Heart left ventricle (tissue), 16 donors: ENCODE measurements at regions of chr16 and their contacts with region 1.

Region 1: GRCh38 chr16:56203052-56203451 is 11.8 kb downstream of the GNAO1 start:
- DNase-seq: no peak
- ATAC-seq: peak; percentile 37 to 81 (median 68)
- H3K4me3 ChIP-seq: no peak overlapping the region
- H3K27ac ChIP-seq: peak overlapping the region in 1 of 12 donors; percentile 39
- H3K4me1 ChIP-seq: peaks cover 0 to 26% (median 12%) of the 10 kb centered on the region in 12 donors
- H3K27me3 ChIP-seq: no peaks in the 10 kb centered on the region
- CTCF ChIP-seq: peak in 10 of 12 donors; percentile 15 to 46 (median 38)
- POLR2A ChIP-seq: no peak

Region 2: GRCh38 chr16:55944377-55944802 is 258.7 kb before region 1 on chr16:
- intact Hi-C with region 1: loop called in 8 of 10 experiments (anchors 5 to 10 kb)
- DNase-seq: peak; percentile 59 to 77 (median 71)
- ATAC-seq: peak; percentile 80 to 95 (median 89)
- H3K4me3 ChIP-seq: no peak overlapping the region
- H3K27ac ChIP-seq: peak overlapping the region in 1 of 12 donors; percentile 14
- H3K4me1 ChIP-seq: peaks cover 0 to 6% (median 0%) of the 10 kb centered on the region in 12 donors
- H3K27me3 ChIP-seq: peaks cover 0 to 5% (median 0%) of the 10 kb centered on the region in 9 donors
- CTCF ChIP-seq: peak; percentile 85 to 96 (median 92)
- POLR2A ChIP-seq: no peak

Region 3: DNA sequence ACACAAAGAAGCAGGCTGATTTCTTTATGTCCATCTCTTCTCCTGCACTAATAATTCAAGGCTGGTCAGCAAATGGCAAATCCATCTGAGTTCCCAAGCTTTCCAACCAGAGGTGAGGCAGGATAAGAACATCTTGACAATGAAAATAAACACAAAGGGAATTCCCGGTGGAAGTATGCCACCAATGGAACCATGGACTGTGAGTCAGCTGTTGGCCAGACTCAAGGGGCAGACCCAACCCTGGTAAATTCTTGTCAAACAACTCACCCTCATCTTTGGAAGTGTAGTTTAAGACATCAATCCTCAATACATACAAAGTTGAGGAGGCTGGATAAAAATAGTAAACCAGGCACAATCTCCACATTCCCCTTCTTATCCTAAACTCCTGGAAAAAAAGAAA is 253.5 kb before region 1 on chr16:
- intact Hi-C with region 1: loop called in 8 of 10 experiments (anchors 5 to 10 kb)
- DNase-seq: no peak
- ATAC-seq: no peak
- H3K4me3 ChIP-seq: no peak overlapping the region
- H3K27ac ChIP-seq: no peak overlapping the region
- H3K4me1 ChIP-seq: peaks cover 0 to 5% (median 0%) of the 10 kb centered on the region in 12 donors
- H3K27me3 ChIP-seq: no peaks in the 10 kb centered on the region
- CTCF ChIP-seq: no peak
- POLR2A ChIP-seq: no peak

Region 4: GRCh38 chr16:56041686-56042085 is 161.4 kb before region 1 on chr16:
- intact Hi-C with region 1: loop called in 4 of 10 experiments (anchors 10 kb)
- DNase-seq: peak in 4 of 5 donors; percentile 22 to 37 (median 30)
- ATAC-seq: peak; percentile 69 to 93 (median 92)
- H3K4me3 ChIP-seq: no peak overlapping the region
- H3K27ac ChIP-seq: no peak overlapping the region
- H3K4me1 ChIP-seq: peaks cover 0 to under 1% (median 0%) of the 10 kb centered on the region in 12 donors
- H3K27me3 ChIP-seq: no peaks in the 10 kb centered on the region
- CTCF ChIP-seq: peak in 11 of 12 donors; percentile 32 to 57 (median 46)
- POLR2A ChIP-seq: no peak

Region 5: GRCh38 chr16:56266641-56267607 is 63.9 kb after region 1 on chr16:
- intact Hi-C with region 1: no loop called
- DNase-seq: no peak
- ATAC-seq: no peak
- H3K4me3 ChIP-seq: no peak overlapping the region
- H3K27ac ChIP-seq: peak overlapping the region in 1 of 12 donors; percentile 89
- H3K4me1 ChIP-seq: peaks cover 0 to 45% (median 22%) of the 10 kb centered on the region in 12 donors
- H3K27me3 ChIP-seq: no peaks in the 10 kb centered on the region
- CTCF ChIP-seq: no peak
- POLR2A ChIP-seq: no peak

Region 6: DNA sequence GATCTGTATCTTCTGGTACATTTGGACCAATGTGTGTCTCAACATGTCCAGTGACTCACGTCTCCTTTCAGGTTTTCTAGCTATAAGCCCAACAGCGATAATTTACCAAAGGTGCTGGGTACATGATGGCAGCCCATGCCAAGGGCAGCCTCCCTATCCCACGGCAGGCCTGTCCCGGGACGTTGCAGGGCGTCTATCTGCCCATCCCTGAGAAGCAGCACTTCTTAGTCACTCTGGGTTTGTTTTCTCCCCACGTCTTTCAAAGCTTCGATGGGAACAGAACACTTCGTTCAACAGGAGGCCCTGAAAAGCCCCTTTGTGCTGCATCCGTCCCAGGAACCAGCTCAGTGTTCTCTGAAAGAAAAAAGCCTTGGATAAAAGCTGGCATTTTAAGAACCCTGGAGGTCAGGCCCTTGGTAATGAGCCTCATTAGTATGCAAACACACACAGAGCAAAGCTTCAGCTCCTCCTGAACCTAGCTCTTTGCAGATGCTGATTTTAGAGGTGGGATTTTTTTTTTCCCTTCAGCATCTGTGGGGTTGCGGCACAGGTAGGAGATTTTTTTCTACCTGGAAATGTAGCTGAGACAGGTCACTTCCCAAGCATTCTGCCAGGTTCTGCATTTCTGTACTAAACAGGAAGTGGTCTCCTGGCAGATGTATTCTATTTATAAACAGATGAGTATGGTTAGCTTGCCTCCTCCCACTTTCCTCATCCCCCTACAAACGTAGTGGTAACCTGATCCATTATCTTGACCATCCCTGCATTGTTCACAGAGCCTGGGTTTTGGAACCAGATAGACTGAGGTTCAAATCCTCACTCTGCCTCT is 344.3 kb after region 1 on chr16:
- intact Hi-C with region 1: no loop called
- DNase-seq: no peak
- ATAC-seq: no peak
- H3K4me3 ChIP-seq: no peak overlapping the region
- H3K27ac ChIP-seq: peak overlapping the region in 1 of 12 donors; percentile 47
- H3K4me1 ChIP-seq: peaks cover 2 to 10% (median 7%) of the 10 kb centered on the region in 12 donors
- H3K27me3 ChIP-seq: no peaks in the 10 kb centered on the region
- CTCF ChIP-seq: no peak
- POLR2A ChIP-seq: no peak